ENCODE measurements at regions of chr1 and their contacts with region 1.

Region 1: GRCh38 chr1:223845810-223846682 is at the start of gene TP53BP2:
- DNase-seq: peak; percentile 96
- H3K4me3 Mint-ChIP-seq: peak within 1 kb of the TSS; percentile 91
- H3K27ac Mint-ChIP-seq: peak within 1 kb of the TSS; percentile 97
- H3K4me1 Mint-ChIP-seq: peaks cover 31% of the 10 kb centered on the region
- H3K27me3 Mint-ChIP-seq: peaks cover 5% of the 10 kb centered on the region
- total RNA-seq, gene TP53BP2: 37.1 and 47.7 TPM in 2 replicates

Region 2: GRCh38 chr1:223244366-223245103 is 601.5 kb before region 1 on chr1:
- intact Hi-C with region 1: no loop called
- DNase-seq: no peak
- H3K4me3 Mint-ChIP-seq: no peak overlapping the region
- H3K27ac Mint-ChIP-seq: no peak overlapping the region
- H3K4me1 Mint-ChIP-seq: peaks cover 6% of the 10 kb centered on the region
- H3K27me3 Mint-ChIP-seq: peaks cover 2% of the 10 kb centered on the region

Region 3: DNA sequence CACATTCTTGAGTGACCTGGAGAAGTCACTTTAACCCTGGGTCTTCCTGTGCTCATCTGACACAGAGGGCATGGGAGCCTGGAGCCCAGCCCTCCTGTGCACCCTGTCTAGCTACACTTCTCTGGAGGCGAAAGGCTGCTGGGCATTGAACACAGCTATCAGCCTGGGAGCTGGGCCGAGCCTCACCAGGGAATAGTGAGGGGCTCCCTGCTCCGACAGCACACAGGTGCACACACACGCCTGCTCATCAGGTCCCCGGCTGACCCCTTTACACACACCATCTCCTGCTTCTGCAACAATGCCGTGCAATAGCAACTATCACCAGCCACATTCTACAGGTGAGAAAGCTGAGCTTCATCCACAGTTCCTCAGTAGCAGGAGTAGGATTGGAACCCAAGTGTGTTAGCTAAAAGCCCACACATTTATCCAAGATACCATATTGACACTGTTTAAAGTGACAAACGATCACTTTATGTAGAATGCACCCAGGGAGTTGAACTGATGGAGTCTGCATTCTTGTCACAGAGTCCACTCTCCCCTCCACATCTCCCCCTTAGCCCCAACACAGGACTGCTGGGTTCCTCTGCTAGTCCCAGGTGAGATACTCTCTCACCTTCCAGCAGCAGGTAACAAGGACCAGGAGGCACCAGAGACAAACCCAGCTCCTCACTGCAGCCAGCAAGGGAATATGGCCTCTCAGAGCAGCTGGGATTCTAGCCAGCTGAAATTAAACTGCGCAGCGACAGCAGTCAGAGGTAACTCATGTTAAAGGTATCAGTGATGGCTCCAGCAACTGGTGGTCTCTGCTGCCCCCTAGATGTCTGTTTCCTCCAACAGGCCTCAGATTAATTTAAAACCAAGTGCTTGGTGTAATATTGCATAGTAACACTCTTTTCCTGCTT is 162.2 kb before region 1 on chr1:
- intact Hi-C with region 1: no loop called
- DNase-seq: peak; percentile 73
- H3K4me3 Mint-ChIP-seq: no peak overlapping the region
- H3K27ac Mint-ChIP-seq: no peak overlapping the region
- H3K4me1 Mint-ChIP-seq: no peaks in the 10 kb centered on the region
- H3K27me3 Mint-ChIP-seq: peaks cover 30% of the 10 kb centered on the region

Region 4: DNA sequence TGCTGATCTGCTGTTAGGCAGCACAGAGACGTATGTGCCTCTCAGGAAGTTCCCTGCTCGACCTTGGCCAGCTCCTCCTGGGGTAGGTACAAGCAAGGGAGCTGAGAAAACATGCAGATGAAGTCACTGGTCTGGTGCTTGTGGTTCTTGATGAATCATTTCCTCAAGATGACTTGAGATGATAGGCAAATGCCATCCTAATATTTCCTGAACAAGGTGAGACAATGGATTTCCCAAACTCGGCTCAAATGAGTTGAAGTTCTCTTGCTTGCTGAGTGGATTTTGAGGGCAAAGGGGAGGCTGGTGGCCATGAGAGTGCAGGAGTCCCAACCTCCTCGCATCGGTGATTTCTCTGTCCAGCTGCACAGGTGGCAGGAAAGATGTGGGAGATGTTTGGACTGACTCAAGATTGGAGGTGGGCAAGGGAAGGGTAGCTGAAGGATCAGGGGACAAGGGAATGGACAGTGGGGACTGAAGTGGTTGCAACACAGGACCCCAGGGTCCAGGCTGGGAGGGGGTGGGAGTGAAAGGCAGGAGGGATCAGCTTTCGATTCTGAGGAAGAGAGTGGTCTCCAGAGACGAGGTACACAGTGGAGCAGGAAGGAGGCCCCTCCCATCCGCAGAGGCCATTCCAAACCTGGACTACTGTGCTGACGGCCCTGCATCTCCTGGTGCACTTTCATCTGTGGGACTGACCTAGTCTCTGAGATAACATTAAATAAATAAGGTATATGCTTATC is 69.8 kb before region 1 on chr1:
- intact Hi-C with region 1: loop called (anchors 2 kb)
- DNase-seq: peak; percentile 75
- H3K4me3 Mint-ChIP-seq: peak overlapping the region; percentile 32
- H3K27ac Mint-ChIP-seq: peak overlapping the region; percentile 77
- H3K4me1 Mint-ChIP-seq: peaks cover 22% of the 10 kb centered on the region
- H3K27me3 Mint-ChIP-seq: no peaks in the 10 kb centered on the region

Region 5: DNA sequence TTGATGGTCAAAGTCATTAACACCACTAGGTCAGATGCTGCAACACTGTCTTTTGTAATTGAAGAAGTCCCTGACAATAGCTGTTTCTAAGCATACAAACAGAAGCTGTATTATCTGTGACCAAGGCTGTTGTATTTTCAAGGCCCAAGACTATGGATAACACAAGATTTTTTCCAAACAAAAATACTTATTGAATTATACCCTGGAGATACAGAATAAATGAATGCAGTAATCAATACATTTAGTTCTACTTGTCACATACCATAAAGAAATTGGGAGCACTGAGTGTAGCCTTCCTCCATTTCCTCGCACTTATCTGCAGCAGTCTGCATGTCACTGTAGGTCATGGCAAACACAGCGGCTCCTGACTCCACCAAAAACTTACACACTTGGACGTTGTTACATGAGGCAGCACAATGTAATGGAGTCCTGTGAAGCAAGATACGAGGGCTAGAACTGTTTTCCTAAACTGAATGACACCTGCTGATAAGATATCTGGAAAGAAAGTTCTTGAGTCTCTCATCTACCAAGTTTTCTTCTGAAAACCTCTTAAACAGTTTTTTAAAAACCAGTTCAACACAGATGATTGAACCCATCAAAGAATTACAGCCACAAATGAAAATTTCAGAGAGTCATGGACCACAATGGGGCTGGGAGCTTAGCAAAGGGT is 57.2 kb before region 1 on chr1:
- intact Hi-C with region 1: no loop called
- DNase-seq: peak; percentile 39
- H3K4me3 Mint-ChIP-seq: no peak overlapping the region
- H3K27ac Mint-ChIP-seq: no peak overlapping the region
- H3K4me1 Mint-ChIP-seq: peaks cover 2% of the 10 kb centered on the region
- H3K27me3 Mint-ChIP-seq: no peaks in the 10 kb centered on the region

Region 6: DNA sequence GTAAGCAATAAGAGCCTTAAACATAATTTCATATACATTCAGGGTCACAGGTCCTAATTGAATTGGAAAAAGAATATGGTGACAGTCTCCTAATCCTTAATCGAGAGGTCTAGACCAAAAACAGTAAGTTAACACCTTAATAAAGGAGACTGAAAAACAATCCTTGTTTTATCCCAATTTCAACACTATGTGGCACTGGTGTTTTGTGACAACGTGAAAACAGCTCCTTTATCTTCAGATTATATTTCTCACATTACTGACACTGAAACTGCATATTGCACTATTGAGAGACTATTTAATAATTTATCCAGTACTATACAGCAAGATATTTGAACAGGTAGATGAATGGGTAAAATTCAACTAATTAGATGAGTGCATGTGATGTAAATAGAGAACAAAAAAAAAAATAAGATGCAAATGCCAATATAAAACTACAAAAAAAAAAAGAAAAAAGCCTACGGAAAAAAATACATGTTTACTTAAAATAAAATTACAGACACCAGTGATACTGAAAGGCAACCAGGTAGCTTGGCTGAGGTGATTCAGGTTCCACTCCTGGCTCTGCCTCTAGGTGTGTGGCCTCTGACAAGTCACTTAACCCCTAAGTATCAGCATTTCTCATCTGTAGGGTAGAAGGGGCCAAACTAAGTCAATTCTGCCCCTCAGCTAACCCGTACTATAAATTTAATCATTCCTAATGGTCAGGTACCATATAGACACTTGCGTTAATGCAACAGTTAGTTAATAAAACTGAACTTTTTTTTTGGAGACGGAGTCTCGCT is 34.2 kb before region 1 on chr1:
- intact Hi-C with region 1: loop called (anchors 1 kb)
- DNase-seq: peak; percentile 69
- H3K4me3 Mint-ChIP-seq: no peak overlapping the region
- H3K27ac Mint-ChIP-seq: no peak overlapping the region
- H3K4me1 Mint-ChIP-seq: peaks cover 22% of the 10 kb centered on the region
- H3K27me3 Mint-ChIP-seq: no peaks in the 10 kb centered on the region

Region 7: GRCh38 chr1:223831755-223832636 is 14.1 kb before region 1 on chr1:
- intact Hi-C with region 1: loop called (anchors 1 kb)
- DNase-seq: no peak
- H3K4me3 Mint-ChIP-seq: peak overlapping the region; percentile 51
- H3K27ac Mint-ChIP-seq: peak overlapping the region; percentile 85
- H3K4me1 Mint-ChIP-seq: peaks cover 29% of the 10 kb centered on the region
- H3K27me3 Mint-ChIP-seq: no peaks in the 10 kb centered on the region